Activated T-helper 1 cell treated with anti-CD3 and anti-CD28 coated beads, Interleukin-12 subunit alpha, Interleukin-12 subunit beta, Interleukin-2, Interleukin-4 antibody, amounts not matched to agents 30 ng/mL and 10 ng/mL and 1 ng/mL, durations not matched to agents 14 hours and 24 hours and 36 hours (primary cell): ENCODE measurements at regions of chr13 and their contacts with region 1.

Region 1: GRCh38 chr13:27353166-27353583 is 71.2 kb upstream of the GTF3A start:
- DNase-seq: peak; percentile 34
- H3K4me3 Mint-ChIP-seq: no peak overlapping the region
- H3K27ac Mint-ChIP-seq: peak overlapping the region; percentile 40
- H3K4me1 Mint-ChIP-seq: peaks cover 15% of the 10 kb centered on the region
- H3K27me3 Mint-ChIP-seq: peaks cover 7% of the 10 kb centered on the region

Region 2: GRCh38 chr13:27270594-27271520 is 82.3 kb before region 1 on chr13 and contains the start of gene RASL11A:
- intact Hi-C with region 1: loop called (anchors 2 kb)
- DNase-seq: peak; percentile 63
- H3K4me3 Mint-ChIP-seq: peak within 1 kb of the TSS; percentile 89
- H3K27ac Mint-ChIP-seq: peak within 1 kb of the TSS; percentile 24
- H3K4me1 Mint-ChIP-seq: peaks cover 11% of the 10 kb centered on the region
- H3K27me3 Mint-ChIP-seq: peaks cover 40% of the 10 kb centered on the region
- total RNA-seq, gene RASL11A: 1.9 and 3.2 TPM in 2 replicates

Region 3: DNA sequence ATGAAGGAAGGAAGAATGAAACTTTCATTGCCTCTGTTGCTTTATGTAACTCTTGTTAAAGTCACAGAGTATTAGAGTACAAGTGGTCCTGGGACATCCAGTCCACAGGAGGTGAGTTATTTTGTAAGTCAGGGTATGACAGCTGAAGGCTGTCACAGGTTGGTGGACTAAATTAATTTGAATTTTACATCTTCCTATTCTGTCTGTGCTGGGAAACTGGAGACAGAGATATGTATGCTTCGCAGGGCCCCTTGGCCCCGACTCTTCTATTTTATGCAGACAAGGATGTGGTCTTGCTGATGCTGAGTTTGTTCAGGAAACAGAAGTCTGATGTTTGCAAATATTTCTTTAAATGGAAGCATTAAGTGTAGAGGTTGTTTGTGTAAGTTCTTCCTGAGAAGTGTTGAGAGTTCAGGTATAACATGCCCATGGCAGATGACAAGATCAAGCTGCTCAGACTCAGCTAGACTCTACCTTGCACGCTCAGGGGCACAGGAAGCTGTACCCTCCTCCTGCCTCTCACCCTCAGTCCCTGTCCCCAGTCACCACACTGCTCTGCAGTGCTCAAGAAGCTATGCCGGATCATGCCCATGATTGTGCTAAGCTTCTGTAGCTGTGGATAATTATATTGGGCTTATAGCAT is 59.2 kb before region 1 on chr13:
- intact Hi-C with region 1: loop called (anchors 5 kb)
- DNase-seq: no peak
- H3K4me3 Mint-ChIP-seq: no peak overlapping the region
- H3K27ac Mint-ChIP-seq: no peak overlapping the region
- H3K4me1 Mint-ChIP-seq: peaks cover 17% of the 10 kb centered on the region
- H3K27me3 Mint-ChIP-seq: peaks cover 1% of the 10 kb centered on the region